HEK293 (cell line): ENCODE measurements at regions of chr14 and their contacts with region 1.

Region 1: GRCh38 chr14:76647697-76648298 is 113.5 kb upstream of the VASH1 start:
- H3K4me3 ChIP-seq: no peak overlapping the region
- H3K27ac ChIP-seq: no peak overlapping the region
- H3K4me1 ChIP-seq: no peaks in the 10 kb centered on the region
- CTCF ChIP-seq: no peak

Region 2: GRCh38 chr14:76352639-76353281 is 295.0 kb before region 1 on chr14:
- CTCF ChIA-PET with region 1: interaction called, 14 read pairs
- POLR2A ChIA-PET with region 1: no interaction called
- H3K4me3 ChIP-seq: no peak overlapping the region
- H3K27ac ChIP-seq: no peak overlapping the region
- H3K4me1 ChIP-seq: no peaks in the 10 kb centered on the region
- CTCF ChIP-seq: peak; percentile 91

Region 3: DNA sequence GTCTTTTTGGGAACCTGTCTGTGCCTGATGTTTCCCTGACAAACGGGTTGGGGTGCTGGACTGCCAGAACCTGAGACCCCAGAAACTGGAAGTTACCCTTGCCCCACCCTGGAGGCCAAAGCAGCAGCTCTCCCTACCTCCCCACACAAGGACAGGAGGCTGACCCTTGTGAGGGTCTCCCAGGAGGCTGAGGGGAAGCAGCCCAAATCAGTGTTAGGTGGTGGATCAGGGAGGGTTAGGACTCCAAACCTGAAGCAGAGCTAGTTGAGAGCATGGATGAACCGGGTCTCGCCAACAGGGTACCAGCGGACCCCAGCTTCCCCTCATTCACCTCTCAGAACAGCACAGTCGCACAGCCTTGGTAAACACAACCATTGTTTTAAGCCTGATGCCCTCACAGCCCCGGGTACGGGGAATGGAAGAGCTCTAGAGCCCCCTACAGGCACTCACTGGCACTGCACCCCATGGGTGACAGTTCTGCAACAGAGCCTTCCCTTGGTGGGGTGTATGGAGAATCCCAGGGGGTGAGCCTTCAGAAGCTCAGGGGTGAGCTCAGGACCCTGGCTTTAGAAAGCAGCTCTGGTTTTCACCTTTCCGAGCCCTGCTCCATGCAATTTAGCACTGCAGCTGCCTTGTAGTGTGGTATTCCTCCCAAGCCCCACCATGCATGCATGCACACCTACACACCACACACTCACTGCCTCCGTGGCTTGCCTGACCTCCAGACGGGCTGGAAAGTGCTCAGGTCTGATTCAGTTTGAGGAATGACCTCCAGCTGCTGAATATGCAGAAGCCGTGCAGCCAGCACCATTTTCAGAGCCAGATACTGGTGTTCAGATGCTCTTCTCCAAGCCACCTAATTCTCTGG is 260.6 kb before region 1 on chr14:
- CTCF ChIA-PET with region 1: interaction called, 18 read pairs
- POLR2A ChIA-PET with region 1: no interaction called
- H3K4me3 ChIP-seq: no peak overlapping the region
- H3K27ac ChIP-seq: no peak overlapping the region
- H3K4me1 ChIP-seq: no peaks in the 10 kb centered on the region
- CTCF ChIP-seq: peak; percentile 69

Region 4: GRCh38 chr14:76456200-76456599 is 191.6 kb before region 1 on chr14:
- CTCF ChIA-PET with region 1: interaction called, 13 read pairs
- POLR2A ChIA-PET with region 1: no interaction called
- H3K4me3 ChIP-seq: no peak overlapping the region
- H3K27ac ChIP-seq: no peak overlapping the region
- H3K4me1 ChIP-seq: no peaks in the 10 kb centered on the region
- CTCF ChIP-seq: 0 out of 2 replicates have a peak, but pooled peaks have one; percentile 13

Region 5: GRCh38 chr14:76603713-76604112 is 44.1 kb before region 1 on chr14:
- CTCF ChIA-PET with region 1: no interaction called
- POLR2A ChIA-PET with region 1: no interaction called
- H3K4me3 ChIP-seq: no peak overlapping the region
- H3K27ac ChIP-seq: no peak overlapping the region
- H3K4me1 ChIP-seq: no peaks in the 10 kb centered on the region
- CTCF ChIP-seq: no peak